Lower leg skin (tissue), 4 donors: ENCODE measurements at regions of chr11 and their contacts with region 1.

Region 1: DNA sequence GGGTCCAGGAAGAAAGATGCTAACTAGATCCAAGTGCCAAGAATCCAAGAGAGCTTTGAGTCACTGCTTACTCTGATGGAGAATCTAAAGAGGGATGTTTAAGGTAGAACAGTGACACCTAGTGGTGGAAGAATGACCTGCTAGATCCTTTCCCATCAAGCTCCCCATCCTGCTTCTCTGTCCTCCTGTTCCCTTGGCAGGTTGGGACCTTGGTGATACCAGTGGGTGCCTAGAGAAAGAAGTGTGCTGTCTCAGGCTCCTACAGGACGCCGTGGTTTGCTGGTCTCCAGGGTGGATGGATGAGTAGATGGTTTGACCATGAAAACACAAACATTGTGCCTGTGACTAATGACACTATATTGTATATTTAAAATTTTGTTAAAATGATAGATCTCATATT is 383.7 kb downstream of the TMEM135 start:
- DNase-seq: peak in 1 of 2 donors; percentile 61
- H3K4me3 ChIP-seq: no peak overlapping the region
- CTCF ChIP-seq: peak in 1 of 3 donors; percentile 79
- POLR2A ChIP-seq: no peak

Region 2: DNA sequence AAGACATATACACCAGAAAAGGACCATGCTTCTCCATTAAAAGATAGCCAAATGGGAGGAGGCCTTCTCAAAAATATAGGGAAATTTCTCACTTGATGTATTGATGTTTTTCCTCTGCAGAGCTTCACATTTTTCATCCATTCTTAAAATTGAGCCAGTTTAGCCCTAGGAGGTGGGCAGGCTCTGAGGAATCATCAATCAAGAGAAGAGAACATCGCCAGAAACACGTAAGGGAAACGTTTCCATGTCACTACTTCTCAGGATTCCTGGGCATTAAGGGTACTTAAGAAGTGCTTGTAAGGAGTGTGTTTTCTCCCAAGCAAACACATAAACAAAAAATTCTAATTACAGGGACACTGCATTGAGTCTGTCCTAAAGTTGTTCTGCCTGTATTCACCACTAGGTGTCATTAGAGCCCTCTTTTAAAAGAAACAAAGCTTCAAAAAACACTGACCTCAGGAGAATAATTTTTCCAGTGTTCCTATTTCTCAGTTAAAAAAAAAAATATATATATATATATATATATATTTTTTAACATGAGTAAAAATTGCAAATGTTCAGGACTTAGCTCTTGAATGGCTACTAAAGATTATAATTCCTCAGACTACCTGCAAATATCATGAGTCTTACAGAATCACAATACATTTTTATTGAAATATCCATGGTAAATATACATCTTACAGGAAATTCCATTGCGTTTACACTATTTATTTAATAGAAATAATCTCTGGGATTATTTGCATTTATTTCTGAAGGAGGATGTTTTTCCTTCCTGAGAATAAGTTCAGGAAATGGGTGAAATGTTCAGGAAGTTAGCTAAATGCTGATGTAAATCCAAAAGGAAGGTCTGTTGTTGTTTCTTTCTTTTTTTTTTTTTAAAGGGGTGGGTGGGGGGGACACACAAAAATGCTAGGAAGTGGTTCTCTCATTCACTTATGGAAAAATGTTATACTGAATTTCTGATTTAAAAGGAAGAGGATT is 482.2 kb before region 1 on chr11:
- intact Hi-C with region 1: loop called (anchors 10 kb)
- DNase-seq: no peak
- H3K4me3 ChIP-seq: no peak overlapping the region
- CTCF ChIP-seq: no peak
- POLR2A ChIP-seq: no peak

Region 3: DNA sequence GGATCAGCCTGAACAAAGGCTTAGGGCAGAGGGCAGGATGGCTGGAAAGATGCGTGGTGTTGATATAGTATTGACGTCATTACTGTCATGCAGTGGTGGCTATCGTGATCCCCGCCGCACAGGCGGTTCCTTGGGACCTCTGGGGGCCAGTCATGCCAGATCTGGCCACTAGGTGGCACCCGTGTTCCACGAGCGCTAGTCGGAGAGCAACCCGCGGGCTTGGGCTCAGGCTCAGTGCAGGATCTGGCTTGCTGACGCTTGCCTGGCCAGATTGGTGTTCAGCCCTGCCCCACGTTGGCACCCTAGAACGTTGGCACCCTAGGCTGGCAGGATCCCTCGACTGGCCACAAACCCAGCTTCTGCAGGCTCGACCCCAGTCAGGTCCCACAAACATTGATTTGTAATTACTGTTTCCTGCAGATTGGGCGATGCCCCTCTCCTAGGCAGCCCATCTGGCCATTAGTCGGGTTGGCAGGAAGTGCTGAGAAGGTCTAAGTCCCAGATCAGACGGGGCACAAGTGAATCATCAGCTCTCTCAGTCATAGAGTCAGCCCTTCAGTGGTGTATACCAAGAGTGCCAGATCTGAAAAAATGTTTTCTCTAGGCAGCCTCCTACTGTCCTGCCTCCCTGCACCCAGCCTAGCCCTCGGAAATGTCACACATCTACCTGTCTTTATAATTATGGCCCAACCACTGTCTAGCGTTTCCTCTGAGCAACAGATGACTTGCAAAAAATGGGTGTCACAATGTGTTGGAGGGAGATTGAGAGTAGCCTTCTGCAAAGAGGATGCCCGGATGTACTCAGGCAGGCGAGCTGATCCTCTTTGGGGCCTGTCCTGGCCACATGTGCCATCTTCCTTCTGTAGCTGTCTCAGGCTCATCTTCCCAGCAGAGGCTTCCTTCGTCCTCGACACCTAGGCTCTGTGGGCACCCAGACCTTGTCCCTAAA is 68.4 kb before region 1 on chr11:
- intact Hi-C with region 1: loop called (anchors 2 kb)
- DNase-seq: peak; percentile 78 to 97
- H3K4me3 ChIP-seq: no peak overlapping the region
- CTCF ChIP-seq: peak in 1 of 3 donors; percentile 99
- POLR2A ChIP-seq: no peak